ENCODE measurements at regions of chr18 and their contacts with region 1.

Region 1: GRCh38 chr18:1018181-1018681 is 113.6 kb downstream of the ADCYAP1 start:
- DNase-seq: no peak
- ATAC-seq: peak in 2 of 8 donors; percentile 40 to 44
- H3K4me3 ChIP-seq: no peak overlapping the region
- H3K27ac ChIP-seq: no peak overlapping the region
- H3K4me1 ChIP-seq: peaks cover 0 to 20% (median 9%) of the 10 kb centered on the region in 9 donors
- H3K27me3 ChIP-seq: no peaks in the 10 kb centered on the region
- CTCF ChIP-seq: no peak

Region 2: DNA sequence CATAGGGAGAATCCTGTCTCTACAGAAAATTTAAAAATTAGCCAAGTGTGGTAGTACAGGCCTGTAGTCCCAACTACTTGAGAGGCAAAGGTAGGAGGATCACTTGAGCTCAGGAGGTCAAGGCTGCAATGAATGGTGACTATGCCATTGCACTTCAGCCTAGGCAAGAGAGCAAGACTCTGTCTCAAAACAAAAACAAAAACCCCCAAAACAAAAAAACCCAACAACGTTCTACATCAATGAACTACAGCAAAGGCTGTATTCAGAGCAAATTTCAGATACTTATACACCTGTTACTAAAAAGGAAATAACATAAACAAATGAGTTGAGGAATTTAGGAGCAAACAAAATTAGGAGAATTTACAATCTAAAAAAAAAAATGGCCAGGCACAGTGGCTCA is 228.8 kb before region 1 on chr18:
- intact Hi-C with region 1: no loop called
- DNase-seq: no peak
- ATAC-seq: no peak
- H3K4me3 ChIP-seq: no peak overlapping the region
- H3K27ac ChIP-seq: no peak overlapping the region
- H3K4me1 ChIP-seq: peaks cover 0 to 37% (median 9%) of the 10 kb centered on the region in 9 donors
- H3K27me3 ChIP-seq: peaks cover 0 to 10% (median 0%) of the 10 kb centered on the region in 7 donors
- CTCF ChIP-seq: no peak

Region 3: GRCh38 chr18:950882-951539 is 67.2 kb before region 1 on chr18:
- intact Hi-C with region 1: loop called in 1 of 10 experiments (anchors 10 kb)
- DNase-seq: no peak
- ATAC-seq: no peak
- H3K4me3 ChIP-seq: no peak overlapping the region
- H3K27ac ChIP-seq: no peak overlapping the region
- H3K4me1 ChIP-seq: no peaks in the 10 kb centered on the region
- H3K27me3 ChIP-seq: peaks cover 0 to 8% (median 4%) of the 10 kb centered on the region in 7 donors
- CTCF ChIP-seq: no peak

Region 4: GRCh38 chr18:1062588-1062987 is 44.4 kb after region 1 on chr18:
- intact Hi-C with region 1: loop called in 1 of 10 experiments (anchors 1 kb)
- DNase-seq: no peak
- ATAC-seq: no peak
- H3K4me3 ChIP-seq: no peak overlapping the region
- H3K27ac ChIP-seq: no peak overlapping the region
- H3K4me1 ChIP-seq: no peaks in the 10 kb centered on the region
- H3K27me3 ChIP-seq: no peaks in the 10 kb centered on the region
- CTCF ChIP-seq: no peak

Region 5: DNA sequence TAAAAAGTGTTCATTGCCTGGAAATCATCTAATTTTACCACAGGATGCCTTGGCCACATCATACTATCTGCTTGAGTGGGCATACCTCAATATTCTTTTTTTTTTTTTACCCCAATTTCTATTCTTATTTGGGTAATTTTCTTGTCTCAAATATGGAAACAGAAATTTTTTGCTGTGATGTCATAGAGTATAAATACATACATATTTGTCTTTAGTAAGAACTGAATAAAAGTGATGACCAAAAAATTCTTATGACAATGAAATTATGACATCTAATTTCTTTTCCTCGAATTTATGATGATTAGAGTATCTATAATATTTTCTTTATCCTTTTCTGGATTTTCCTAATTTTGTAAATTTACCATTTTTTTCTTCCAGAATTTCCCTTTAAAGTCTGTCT is 64.3 kb after region 1 on chr18:
- intact Hi-C with region 1: loop called in 1 of 10 experiments (anchors 10 kb)
- DNase-seq: no peak
- ATAC-seq: no peak
- H3K4me3 ChIP-seq: no peak overlapping the region
- H3K27ac ChIP-seq: no peak overlapping the region
- H3K4me1 ChIP-seq: no peaks in the 10 kb centered on the region
- H3K27me3 ChIP-seq: no peaks in the 10 kb centered on the region
- CTCF ChIP-seq: no peak

Region 6: DNA sequence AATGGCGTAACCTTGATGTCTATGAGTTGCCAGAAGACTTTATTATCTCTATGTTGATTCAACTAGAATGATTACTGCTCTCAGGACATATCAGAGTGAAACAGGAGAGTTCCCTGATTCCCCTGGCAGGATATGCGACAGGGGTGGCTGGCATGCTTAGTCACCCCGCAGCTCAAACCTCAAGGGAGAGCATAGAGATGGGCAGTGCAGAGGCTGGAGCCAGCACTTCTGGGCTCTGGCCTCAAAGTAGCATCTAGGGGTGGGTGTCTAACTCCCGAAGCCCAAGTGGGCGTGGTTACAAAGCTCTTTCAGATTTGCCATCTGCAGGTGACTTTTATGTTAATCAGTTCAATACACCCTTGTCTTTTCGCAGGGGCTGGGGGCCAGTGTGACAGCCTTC is 278.0 kb after region 1 on chr18:
- intact Hi-C with region 1: no loop called
- DNase-seq: no peak
- ATAC-seq: no peak
- H3K4me3 ChIP-seq: no peak overlapping the region
- H3K27ac ChIP-seq: no peak overlapping the region
- H3K4me1 ChIP-seq: no peaks in the 10 kb centered on the region
- H3K27me3 ChIP-seq: no peaks in the 10 kb centered on the region
- CTCF ChIP-seq: no peak

Measured in heart right ventricle (tissue), 16 donors.